BJ (cell line): ENCODE measurements at regions of chr14 and their contacts with region 1.

Region 1: GRCh38 chr14:23068476-23069412 is 11.4 kb upstream of the CDH24 start:
- DNase-seq: peak; percentile 70
- H3K4me3 ChIP-seq: no peak overlapping the region
- H3K27me3 ChIP-seq: no peaks in the 10 kb centered on the region
- CTCF ChIP-seq: peak; percentile 99

Region 2: GRCh38 chr14:22973217-22974032 is 95.3 kb before region 1 on chr14:
- CTCF ChIA-PET with region 1: interaction called, 15 read pairs
- POLR2A ChIA-PET with region 1: no interaction called
- DNase-seq: no peak
- H3K4me3 ChIP-seq: no peak overlapping the region
- H3K27me3 ChIP-seq: no peaks in the 10 kb centered on the region
- CTCF ChIP-seq: peak; percentile 65

Region 3: DNA sequence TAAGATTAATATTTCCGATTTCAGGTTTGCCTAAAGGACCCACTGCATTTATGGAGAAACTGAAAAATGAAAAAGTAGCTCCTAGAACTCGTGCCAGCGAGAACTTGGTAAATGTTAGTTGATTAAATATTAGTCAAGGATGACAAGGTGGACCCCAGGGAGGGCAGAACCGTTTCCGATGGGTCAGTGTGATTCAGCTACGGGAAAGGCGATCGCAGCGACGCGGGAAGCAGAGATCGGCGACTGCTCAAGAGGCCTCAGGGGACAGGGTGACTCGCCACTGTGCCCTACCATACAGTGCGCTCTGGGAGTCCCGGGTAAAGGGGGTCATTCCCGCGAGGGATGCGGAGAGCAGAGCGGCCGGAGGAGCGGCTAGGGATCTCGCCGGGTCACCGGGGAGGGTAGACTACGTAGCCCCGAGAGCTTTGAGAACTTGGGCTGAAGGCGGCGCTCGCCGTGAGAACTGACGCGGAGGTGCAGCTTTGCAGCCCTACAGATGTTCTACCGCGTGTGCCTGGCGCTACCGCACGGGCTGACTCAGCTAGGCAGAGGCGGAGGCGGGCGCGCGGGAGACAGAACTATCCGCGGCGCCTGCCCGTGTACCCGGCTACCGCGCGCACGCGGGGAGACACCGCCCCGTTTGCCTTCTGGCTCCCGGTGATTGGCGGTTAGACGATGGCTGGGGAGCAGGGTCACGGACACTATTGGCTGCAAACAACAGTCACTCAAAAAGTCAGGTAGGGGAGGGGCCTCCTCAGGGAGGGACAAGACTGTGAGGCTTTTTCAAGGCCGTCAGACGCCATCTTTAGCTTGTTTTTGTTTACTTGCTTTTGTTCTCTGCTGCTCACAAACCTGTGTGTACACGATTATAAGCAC is 62.0 kb before region 1 on chr14:
- CTCF ChIA-PET with region 1: interaction called, 11 read pairs
- POLR2A ChIA-PET with region 1: no interaction called
- DNase-seq: peak; percentile 87
- H3K4me3 ChIP-seq: peak overlapping the region; percentile 75
- H3K27me3 ChIP-seq: no peaks in the 10 kb centered on the region
- CTCF ChIP-seq: peak; percentile 51

Region 4: DNA sequence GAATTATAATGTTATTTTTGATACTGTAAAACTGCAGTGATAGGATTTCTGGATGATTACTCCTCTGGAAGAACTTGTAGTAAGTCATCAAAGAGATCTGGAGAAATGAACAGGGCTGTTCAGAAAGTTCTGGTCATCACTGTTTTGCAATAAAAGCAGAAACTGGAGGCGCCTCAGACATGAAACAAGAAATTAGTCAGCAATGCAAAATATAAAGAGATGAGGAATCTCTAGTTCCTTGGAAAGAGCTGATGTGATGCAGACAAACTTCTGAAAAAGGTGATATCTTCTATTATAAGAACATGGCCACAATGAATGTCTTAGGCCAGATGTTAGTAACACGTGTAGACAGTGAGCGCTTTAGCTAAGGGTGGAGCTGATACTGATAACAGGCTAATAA is 16.7 kb after region 1 on chr14:
- CTCF ChIA-PET with region 1: interaction called, 47 read pairs
- POLR2A ChIA-PET with region 1: no interaction called
- DNase-seq: no peak
- H3K4me3 ChIP-seq: no peak overlapping the region
- H3K27me3 ChIP-seq: no peaks in the 10 kb centered on the region
- CTCF ChIP-seq: no peak

Region 5: DNA sequence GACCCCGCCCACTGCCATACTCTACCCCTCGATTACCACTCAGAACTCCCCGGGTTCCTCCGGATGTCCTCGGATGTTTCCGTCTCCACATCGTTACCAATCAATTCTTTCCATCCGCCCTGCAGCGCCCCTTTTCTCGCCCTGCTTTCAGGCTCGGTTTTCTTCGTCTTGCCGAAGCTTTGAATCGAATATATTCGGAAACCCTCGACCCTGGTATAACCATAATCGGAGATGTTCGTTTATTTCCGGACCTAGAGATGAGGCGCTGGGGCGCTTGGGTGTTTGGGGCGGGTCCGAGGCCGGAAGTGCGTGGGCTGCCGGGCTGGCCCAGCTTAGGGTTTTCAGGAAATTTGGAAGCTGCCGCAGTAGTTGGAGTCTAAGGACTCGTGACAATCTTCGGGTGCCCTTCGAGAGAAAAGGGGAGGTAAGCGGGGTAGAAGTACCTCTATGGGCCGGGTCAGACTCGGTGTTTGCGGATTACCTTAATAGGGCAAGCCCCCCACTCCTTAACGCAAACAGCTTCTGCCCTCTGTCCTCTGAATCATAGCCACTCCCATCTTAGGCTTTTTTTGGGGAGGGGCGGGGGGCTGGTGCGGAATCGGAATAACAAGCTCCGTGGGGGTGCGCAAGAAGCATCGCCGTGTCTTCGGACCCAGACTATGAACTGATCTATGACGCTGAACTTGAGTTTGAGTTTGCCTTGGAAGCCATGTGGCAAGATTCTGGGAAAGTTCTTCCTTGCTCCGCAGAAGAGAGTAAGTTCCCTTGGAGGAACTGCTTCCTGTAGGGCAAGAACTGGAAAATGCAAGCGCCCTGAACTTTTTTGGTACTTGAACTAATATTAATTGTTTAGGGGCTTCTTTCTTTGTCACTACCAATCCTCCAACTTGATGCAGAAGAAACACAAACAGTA is 26.7 kb after region 1 on chr14 and contains the start of gene C14orf119:
- CTCF ChIA-PET with region 1: interaction called, 33 read pairs
- POLR2A ChIA-PET with region 1: interaction called, 5 read pairs
- DNase-seq: peak; percentile 99
- H3K4me3 ChIP-seq: peak within 1 kb of the TSS; percentile 89
- H3K27me3 ChIP-seq: no peaks in the 10 kb centered on the region
- CTCF ChIP-seq: no peak
- polyA plus RNA-seq, gene C14orf119: 104 and 112 TPM in 2 replicates

Region 6: DNA sequence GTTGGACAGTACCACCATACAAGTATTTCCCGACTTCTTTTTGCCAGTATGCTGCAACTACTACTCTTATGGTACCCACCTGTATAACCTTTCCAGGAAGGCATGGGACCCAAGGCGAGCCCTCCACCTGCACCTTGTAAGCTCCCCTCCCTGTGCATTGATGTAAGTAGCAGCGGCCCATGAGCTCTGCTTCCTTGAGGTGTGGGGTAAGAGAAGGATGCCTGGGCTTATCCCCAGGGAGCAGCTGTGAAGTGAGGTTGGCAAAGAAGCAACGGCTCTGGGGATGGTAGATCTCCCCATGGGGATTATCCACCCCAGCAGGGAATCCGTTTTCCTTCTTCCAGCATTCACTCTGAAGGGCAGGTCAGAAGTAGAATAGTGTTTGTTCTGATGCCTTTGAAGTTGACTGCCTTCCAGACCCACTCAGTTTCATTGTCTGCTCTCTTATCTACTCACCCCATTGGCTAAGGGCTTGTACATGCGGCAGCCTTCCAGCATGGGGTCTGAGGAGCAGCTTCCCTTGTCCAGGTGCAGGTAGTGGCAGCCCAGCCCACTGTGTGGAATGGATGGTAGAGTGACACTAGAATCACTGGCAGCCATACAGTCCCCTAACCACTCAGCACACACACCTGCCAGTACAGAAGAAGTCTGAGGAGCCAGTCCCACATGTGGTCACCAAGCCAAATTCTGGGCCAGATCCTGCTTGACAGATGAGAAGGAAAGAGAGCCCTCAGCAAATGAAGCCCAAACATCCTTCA is 32.6 kb after region 1 on chr14:
- CTCF ChIA-PET with region 1: interaction called, 33 read pairs
- POLR2A ChIA-PET with region 1: no interaction called
- DNase-seq: no peak
- H3K4me3 ChIP-seq: no peak overlapping the region
- H3K27me3 ChIP-seq: no peaks in the 10 kb centered on the region
- CTCF ChIP-seq: no peak

Region 7: GRCh38 chr14:23114669-23115491 is 46.1 kb after region 1 on chr14:
- CTCF ChIA-PET with region 1: interaction called, 144 read pairs
- POLR2A ChIA-PET with region 1: interaction called, 4 read pairs
- DNase-seq: peak; percentile 92
- H3K4me3 ChIP-seq: no peak overlapping the region
- H3K27me3 ChIP-seq: peaks cover under 1% of the 10 kb centered on the region; the same call in 1 of the 2 replicates
- CTCF ChIP-seq: no peak